Sigmoid colon (tissue), 7 donors: ENCODE measurements at regions of chr18 and their contacts with region 1.

Region 1: DNA sequence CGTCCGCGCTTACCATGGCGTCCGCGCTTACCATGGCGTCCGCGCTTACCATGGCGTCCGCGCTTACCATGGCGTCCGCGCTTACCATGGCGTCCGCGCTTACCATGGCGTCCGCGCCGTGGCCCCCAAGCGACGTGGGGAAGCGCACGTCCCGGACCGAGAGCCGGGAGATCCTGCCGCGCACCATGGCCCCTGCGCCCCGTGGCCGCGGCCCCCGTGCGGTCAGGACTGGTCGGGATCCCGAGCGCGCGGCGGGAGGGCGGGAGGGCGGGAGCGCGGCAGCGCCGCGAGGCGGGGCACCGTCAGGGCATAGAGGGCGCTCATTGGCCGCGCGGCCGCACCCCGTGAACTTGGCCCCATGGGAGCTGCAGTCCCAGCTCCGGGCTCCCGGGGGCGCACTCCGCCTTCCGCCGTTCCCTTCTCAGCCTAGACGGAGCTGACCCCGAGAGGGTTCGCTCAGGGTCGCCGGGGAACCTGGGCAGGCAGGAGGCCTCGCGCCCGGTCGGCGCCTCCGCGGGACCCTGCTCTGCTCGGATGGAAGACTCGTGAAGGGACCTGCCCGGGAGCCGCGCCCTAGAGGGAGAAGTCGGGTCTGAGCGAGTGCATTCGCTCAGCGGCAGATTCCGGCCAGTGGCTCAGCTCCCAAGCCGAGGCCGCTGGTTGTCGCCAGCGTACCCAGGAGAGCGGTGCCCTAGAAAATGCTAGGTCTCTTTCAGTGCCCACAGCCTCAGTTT is at the start of gene ENOSF1:
- DNase-seq: peak; percentile 93
- H3K4me3 ChIP-seq: peak within 1 kb of the TSS; percentile 38 to 80 (median 52)
- H3K27ac ChIP-seq: peak within 1 kb of the TSS; percentile 78 to 88 (median 81)
- H3K4me1 ChIP-seq: peaks cover 0 to 18% (median 11%) of the 10 kb centered on the region in 4 donors
- H3K27me3 ChIP-seq: no peaks in the 10 kb centered on the region
- CTCF ChIP-seq: peak; percentile 50 to 74 (median 52)
- EP300 ChIP-seq: no peak
- POLR2A ChIP-seq: no peak
- total RNA-seq, gene ENOSF1: 37.5 to 56.9 (median 52.7) TPM

Region 2: GRCh38 chr18:267688-268552 is 444.6 kb before region 1 on chr18 and contains the start of gene THOC1:
- intact Hi-C with region 1: loop called (anchors 10 kb)
- DNase-seq: peak; percentile 96
- H3K4me3 ChIP-seq: peak within 1 kb of the TSS; percentile 73 to 91 (median 75)
- H3K27ac ChIP-seq: peak within 1 kb of the TSS; percentile 82 to 87 (median 85)
- H3K4me1 ChIP-seq: peaks cover 0 to 26% (median 16%) of the 10 kb centered on the region in 4 donors
- H3K27me3 ChIP-seq: no peaks in the 10 kb centered on the region
- CTCF ChIP-seq: no peak
- EP300 ChIP-seq: peak in 1 of 4 donors; percentile 9
- POLR2A ChIP-seq: peak; percentile 71 to 84
- total RNA-seq, gene THOC1: 40.8 to 71.2 (median 46.9) TPM

Region 3: GRCh38 chr18:658001-658946 is 54.3 kb before region 1 on chr18:
- intact Hi-C with region 1: loop called (anchors 5 kb)
- DNase-seq: peak; percentile 88
- H3K4me3 ChIP-seq: peak overlapping the region; percentile 44 to 79 (median 59)
- H3K27ac ChIP-seq: peak overlapping the region in 2 of 4 donors; percentile 36 to 63
- H3K4me1 ChIP-seq: peaks cover 0 to 19% (median 17%) of the 10 kb centered on the region in 4 donors
- H3K27me3 ChIP-seq: peaks cover 0 to 52% (median 24%) of the 10 kb centered on the region in 3 donors
- CTCF ChIP-seq: no peak
- EP300 ChIP-seq: no peak
- POLR2A ChIP-seq: no peak

Region 4: DNA sequence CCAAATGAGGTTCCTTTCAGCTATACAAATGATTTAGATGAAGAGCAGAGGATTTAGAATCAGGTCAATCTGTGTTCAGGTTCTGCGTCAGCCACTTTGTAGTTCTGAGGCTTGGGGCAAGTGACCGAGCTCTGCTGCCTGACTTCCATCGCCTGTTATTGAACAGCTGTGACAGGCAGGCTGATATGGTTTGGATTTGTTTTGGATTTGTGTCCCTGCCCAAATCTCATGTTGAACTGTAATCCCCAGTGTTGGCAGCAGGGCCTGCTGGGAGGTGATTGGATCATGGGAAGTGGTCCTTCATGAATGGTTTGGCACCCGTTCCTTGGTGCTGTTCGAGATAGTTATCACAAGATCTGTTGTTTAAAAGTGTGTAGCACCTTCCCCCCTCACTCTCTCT is 36.5 kb before region 1 on chr18:
- intact Hi-C with region 1: no loop called
- DNase-seq: no peak
- H3K4me3 ChIP-seq: no peak overlapping the region
- H3K27ac ChIP-seq: no peak overlapping the region
- H3K4me1 ChIP-seq: peaks cover 0 to 28% (median 23%) of the 10 kb centered on the region in 4 donors
- H3K27me3 ChIP-seq: no peaks in the 10 kb centered on the region
- CTCF ChIP-seq: no peak
- EP300 ChIP-seq: no peak
- POLR2A ChIP-seq: no peak

Region 5: GRCh38 chr18:812376-813171 is 100.0 kb after region 1 on chr18:
- intact Hi-C with region 1: loop called (anchors 5 kb)
- DNase-seq: peak; percentile 93
- H3K4me3 ChIP-seq: peak overlapping the region; percentile 82 to 94 (median 88)
- H3K27ac ChIP-seq: peak overlapping the region; percentile 95 to 97 (median 97)
- H3K4me1 ChIP-seq: peaks cover 0 to 41% (median 25%) of the 10 kb centered on the region in 4 donors
- H3K27me3 ChIP-seq: no peaks in the 10 kb centered on the region
- CTCF ChIP-seq: no peak
- EP300 ChIP-seq: no peak
- POLR2A ChIP-seq: peak; percentile 6 to 40

Region 6: GRCh38 chr18:907115-907884 is 194.7 kb after region 1 on chr18:
- intact Hi-C with region 1: no loop called
- DNase-seq: no peak
- H3K4me3 ChIP-seq: peak overlapping the region in 3 of 4 donors; percentile 31 to 43 (median 37)
- H3K27ac ChIP-seq: no peak overlapping the region
- H3K4me1 ChIP-seq: peaks cover 0 to 52% (median 48%) of the 10 kb centered on the region in 4 donors
- H3K27me3 ChIP-seq: peaks cover 56 to 100% (median 84%) of the 10 kb centered on the region in 3 donors
- CTCF ChIP-seq: no peak
- EP300 ChIP-seq: no peak
- POLR2A ChIP-seq: no peak